ENCODE measurements at regions of chr1 and their contacts with region 1.

Region 1: DNA sequence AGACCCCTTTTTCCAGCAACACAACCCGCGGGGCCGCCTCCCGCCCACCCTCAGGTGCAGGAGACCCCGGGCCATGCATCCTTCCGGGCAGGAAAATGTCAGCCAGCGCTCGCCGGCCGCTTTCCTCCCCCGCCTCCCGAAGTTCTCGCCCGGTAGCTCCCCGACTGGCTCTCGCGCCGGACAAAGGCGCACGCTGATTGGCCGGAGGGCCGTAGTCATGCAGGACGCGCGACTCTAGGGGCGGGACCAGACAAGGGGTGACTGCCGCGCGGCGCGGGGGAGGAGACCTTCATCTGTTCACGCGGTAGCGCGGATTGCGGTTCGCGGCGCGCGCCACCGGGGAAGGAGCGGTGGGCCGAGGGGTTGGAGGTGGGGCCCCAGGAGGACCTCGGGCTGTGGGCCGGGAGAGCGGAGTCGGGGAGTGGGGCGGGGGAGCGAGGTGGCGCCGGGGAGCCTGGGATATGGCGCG is at the start of gene FLVCR1:
- DNase-seq: peak; percentile 98
- H3K4me3 Mint-ChIP-seq: peak within 1 kb of the TSS; percentile 96
- H3K27ac Mint-ChIP-seq: peak within 1 kb of the TSS; percentile 93
- H3K4me1 Mint-ChIP-seq: peaks cover 20% of the 10 kb centered on the region
- H3K27me3 Mint-ChIP-seq: no peaks in the 10 kb centered on the region
- total RNA-seq, gene FLVCR1: 12.4 to 12.6 TPM

Region 2: GRCh38 chr1:212469701-212470458 is 388.1 kb before region 1 on chr1:
- CTCF ChIA-PET with region 1: no interaction called
- POLR2A ChIA-PET with region 1: no interaction called
- intact Hi-C with region 1: no loop called
- DNase-seq: no peak
- H3K4me3 Mint-ChIP-seq: no peak overlapping the region
- H3K27ac Mint-ChIP-seq: peak overlapping the region; percentile 8
- H3K4me1 Mint-ChIP-seq: no peaks in the 10 kb centered on the region
- H3K27me3 Mint-ChIP-seq: peaks cover 4% of the 10 kb centered on the region

Region 3: GRCh38 chr1:212791676-212792395 is 66.2 kb before region 1 on chr1 and contains the starts of genes NSL1 and TATDN3:
- CTCF ChIA-PET with region 1: interaction called, 3 read pairs
- POLR2A ChIA-PET with region 1: no interaction called
- intact Hi-C with region 1: loop called (anchors 1 kb)
- DNase-seq: peak; percentile 97
- H3K4me3 Mint-ChIP-seq: peak within 1 kb of the TSS; percentile 95
- H3K27ac Mint-ChIP-seq: peak within 1 kb of the TSS; percentile 82
- H3K4me1 Mint-ChIP-seq: peaks cover 32% of the 10 kb centered on the region
- H3K27me3 Mint-ChIP-seq: no peaks in the 10 kb centered on the region
- total RNA-seq, gene NSL1: 39.8 to 41.8 TPM
- total RNA-seq, gene TATDN3: 19.2 to 20.7 TPM

Region 4: GRCh38 chr1:212899845-212900244 is 41.8 kb after region 1 on chr1:
- CTCF ChIA-PET with region 1: no interaction called
- POLR2A ChIA-PET with region 1: no interaction called
- intact Hi-C with region 1: no loop called
- DNase-seq: no peak
- H3K4me3 Mint-ChIP-seq: no peak overlapping the region
- H3K27ac Mint-ChIP-seq: no peak overlapping the region
- H3K4me1 Mint-ChIP-seq: no peaks in the 10 kb centered on the region
- H3K27me3 Mint-ChIP-seq: no peaks in the 10 kb centered on the region

Region 5: DNA sequence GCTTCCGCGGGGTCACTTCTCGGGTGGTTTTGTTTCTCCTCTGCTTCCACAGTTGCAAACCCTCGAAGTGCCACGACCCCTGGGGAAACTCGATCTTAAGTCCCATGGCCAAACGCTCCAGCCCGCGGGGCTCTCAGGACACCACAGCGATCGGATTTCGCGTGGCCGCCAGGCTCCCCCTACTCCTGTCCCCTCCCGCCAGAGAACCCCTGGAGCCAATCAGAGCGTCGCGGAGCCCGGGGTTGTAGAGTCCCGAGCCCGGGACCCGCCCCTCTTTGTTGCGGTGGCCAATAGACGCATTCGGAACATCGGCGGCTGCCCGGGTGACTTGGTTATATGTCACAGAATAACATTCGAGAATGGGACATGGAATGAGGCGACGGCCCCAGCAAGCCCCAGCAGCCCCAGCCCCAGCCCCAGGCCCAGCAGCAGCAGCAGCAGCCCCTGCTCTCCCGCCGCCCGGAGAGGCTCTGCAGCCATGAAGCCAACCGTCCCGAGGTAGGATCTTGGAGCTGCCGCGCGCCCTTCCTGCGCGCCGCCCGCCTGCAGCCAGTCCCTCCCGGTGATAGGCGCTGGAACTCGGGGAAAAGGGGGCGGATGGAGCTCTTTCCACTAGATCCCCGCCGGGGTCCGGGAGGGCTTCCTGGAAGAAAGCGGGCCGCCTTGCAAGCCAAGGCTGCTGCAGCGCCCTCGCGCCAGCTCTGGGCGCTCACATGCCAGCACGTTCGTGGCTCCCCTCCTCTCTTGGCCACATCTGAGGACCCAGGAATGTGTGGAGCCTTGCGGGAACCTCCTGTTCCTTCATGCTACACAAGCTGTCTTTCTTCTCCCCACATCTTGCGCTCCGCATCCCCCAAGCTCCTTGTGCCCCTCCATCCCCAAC is 92.5 kb after region 1 on chr1 and contains the start of gene VASH2:
- CTCF ChIA-PET with region 1: no interaction called
- POLR2A ChIA-PET with region 1: no interaction called
- intact Hi-C with region 1: loop called (anchors 5 kb)
- DNase-seq: peak; percentile 82
- H3K4me3 Mint-ChIP-seq: peak within 1 kb of the TSS; percentile 72
- H3K27ac Mint-ChIP-seq: no peak within 1 kb of the TSS
- H3K4me1 Mint-ChIP-seq: peaks cover 7% of the 10 kb centered on the region
- H3K27me3 Mint-ChIP-seq: peaks cover 39% of the 10 kb centered on the region
- total RNA-seq, gene VASH2: 0.57 to 0.63 TPM

Region 6: DNA sequence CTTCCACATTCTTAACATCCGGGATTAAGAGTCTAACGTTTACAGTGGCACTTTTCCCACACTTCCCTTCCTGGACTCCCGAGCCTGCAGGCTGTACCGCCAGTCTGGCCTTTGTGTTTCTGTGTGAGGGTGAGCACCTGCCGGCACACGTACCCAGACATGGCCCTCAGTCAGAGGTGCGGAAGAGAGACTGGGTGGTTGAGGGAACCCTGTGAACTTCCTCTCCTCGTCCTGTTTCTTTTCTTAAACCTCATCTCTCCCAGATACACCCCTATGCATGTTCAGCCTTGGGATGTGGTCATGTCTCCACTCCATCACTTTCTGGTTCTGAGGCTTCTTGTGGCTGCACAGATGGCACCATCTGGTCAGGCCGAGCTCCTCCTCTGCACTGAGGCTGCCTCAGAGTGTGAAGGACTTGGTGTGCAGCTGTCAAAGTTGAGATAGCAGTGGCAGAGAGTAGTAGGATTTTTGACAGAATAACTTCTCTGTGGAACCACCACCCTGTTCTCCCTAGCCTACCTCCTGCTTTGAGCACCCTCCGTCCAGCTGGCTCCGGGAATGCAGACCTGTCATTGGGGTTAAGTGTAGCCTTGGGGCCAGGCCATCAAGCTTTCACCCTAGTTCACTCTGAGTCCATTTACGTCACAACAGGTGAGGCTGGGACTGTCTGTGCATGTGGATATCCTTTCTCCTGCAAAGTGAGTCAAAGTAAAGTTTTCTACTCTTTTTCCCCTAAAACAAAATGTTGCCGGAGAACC is 123.7 kb after region 1 on chr1:
- CTCF ChIA-PET with region 1: interaction called, 4 read pairs
- POLR2A ChIA-PET with region 1: interaction called, 5 read pairs
- intact Hi-C with region 1: loop called (anchors 2 kb)
- DNase-seq: no peak
- H3K4me3 Mint-ChIP-seq: no peak overlapping the region
- H3K27ac Mint-ChIP-seq: no peak overlapping the region
- H3K4me1 Mint-ChIP-seq: peaks cover 36% of the 10 kb centered on the region
- H3K27me3 Mint-ChIP-seq: no peaks in the 10 kb centered on the region

Region 7: DNA sequence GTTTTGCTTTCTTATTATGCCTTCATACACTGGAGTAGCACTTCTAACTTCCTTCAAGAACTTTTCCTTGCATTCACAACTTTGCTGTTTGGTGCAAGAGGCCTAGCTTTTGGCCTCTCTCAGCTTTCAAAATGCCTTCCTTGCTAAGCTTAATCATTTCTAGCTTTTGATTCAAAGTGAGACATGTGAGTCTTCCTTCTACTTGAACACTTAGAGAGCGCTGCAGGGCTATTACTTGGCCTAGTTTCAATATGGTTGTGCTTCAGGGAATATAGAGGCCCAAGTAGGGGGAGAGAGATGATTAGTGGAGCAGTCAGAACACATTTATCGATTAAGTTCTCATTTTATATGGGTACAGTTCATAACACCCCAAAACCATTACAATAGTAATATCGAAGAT is 145.2 kb after region 1 on chr1:
- CTCF ChIA-PET with region 1: no interaction called
- POLR2A ChIA-PET with region 1: interaction called, 3 read pairs
- intact Hi-C with region 1: loop called (anchors 5 kb)
- DNase-seq: peak; percentile 48
- H3K4me3 Mint-ChIP-seq: no peak overlapping the region
- H3K27ac Mint-ChIP-seq: peak overlapping the region; percentile 57
- H3K4me1 Mint-ChIP-seq: peaks cover 13% of the 10 kb centered on the region
- H3K27me3 Mint-ChIP-seq: no peaks in the 10 kb centered on the region

Region 8: GRCh38 chr1:213015099-213016050 is 157.3 kb after region 1 on chr1 and contains the start of gene ANGEL2:
- CTCF ChIA-PET with region 1: no interaction called
- POLR2A ChIA-PET with region 1: interaction called, 4 read pairs
- intact Hi-C with region 1: loop called (anchors 1 kb)
- DNase-seq: peak; percentile 97
- H3K4me3 Mint-ChIP-seq: peak within 1 kb of the TSS; percentile 98
- H3K27ac Mint-ChIP-seq: peak within 1 kb of the TSS; percentile 99
- H3K4me1 Mint-ChIP-seq: peaks cover 30% of the 10 kb centered on the region
- H3K27me3 Mint-ChIP-seq: no peaks in the 10 kb centered on the region
- total RNA-seq, gene ANGEL2: 41.3 to 46.4 TPM

Region 9: DNA sequence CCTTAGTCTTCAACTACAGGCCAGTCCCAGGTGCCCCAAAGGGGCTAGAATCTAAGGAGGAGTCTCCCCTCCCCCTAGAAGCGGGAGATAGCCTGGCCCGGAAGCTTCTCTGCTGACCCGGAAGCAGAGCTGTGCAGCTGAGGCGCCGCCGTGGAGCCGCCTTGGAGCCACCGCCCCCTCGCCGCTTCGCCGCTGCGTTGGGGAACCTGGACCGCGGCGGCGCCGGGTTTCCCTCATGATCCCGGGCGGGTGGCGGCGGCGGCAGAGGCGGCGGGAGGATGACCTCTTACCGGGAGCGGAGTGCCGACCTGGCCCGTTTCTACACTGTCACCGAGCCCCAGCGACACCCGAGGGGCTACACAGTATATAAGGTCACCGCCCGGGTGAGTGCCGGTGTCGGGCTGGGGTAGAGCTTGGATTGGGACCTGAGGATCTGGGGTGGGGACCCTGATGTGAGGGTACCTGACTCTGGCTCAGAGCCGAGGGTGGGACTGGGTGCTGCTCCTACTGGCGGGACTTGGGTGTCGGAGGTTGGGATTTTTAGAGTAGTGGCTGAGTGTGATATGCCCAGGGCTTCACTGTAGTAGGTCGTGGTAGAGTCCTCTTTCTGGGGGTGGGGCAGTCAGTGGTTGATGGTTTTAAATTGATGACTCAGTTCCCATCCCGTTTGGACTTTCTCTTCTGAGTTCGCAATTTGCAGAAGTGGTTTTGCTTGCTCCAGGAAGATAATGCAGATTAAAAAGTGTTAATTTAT is 193.3 kb after region 1 on chr1 and contains the start of gene RPS6KC1:
- CTCF ChIA-PET with region 1: no interaction called
- POLR2A ChIA-PET with region 1: no interaction called
- intact Hi-C with region 1: loop called (anchors 5 kb)
- DNase-seq: peak; percentile 90
- H3K4me3 Mint-ChIP-seq: peak within 1 kb of the TSS; percentile 98
- H3K27ac Mint-ChIP-seq: peak within 1 kb of the TSS; percentile 83
- H3K4me1 Mint-ChIP-seq: peaks cover 21% of the 10 kb centered on the region
- H3K27me3 Mint-ChIP-seq: peaks cover 1% of the 10 kb centered on the region
- total RNA-seq, gene RPS6KC1: 5.9 to 6.7 TPM